SK-N-SH (cell line): ENCODE measurements at regions of chr10 and their contacts with region 1.

Region 1: DNA sequence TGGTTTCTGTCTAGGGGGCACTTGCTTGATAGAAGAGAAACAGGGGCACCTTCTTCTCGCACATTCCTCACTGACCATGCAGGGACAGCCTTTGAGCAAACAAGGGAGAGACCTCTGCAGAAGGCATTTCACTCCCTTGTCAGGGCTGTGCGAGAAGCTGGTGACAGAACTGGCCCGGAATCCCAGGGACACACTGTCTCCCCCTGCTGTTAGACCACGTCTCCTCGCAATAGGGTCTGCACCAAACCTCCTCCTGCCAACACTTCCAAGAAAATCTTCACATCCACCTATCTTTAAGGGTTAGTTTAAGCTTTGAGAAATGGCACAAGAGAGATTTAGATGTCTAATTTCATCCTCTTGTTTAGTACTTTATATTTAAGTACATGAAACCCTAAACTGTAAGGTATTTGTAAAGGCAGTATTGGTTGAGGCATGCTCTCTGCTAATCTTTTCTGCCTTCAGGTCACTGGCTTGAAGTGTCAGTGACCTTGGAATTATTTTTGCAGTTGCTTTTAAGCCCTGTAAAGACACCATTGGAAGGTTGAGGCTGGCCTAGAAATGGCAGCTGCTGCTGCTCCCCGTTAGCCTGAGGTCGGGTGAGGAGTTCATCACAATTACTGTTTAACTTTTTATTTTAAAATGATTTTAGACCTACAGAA is 37.0 kb downstream of the RBM20 start:
- DNase-seq: peak; percentile 76
- H3K4me3 ChIP-seq: peak overlapping the region in 1 of 2 experiments; percentile 33; a peak in 1 of 4 replicates
- H3K27ac ChIP-seq: no peak overlapping the region
- H3K4me1 ChIP-seq: peaks cover 0 to 18% of the 10 kb centered on the region in 2 experiments; a peak in 2 of 4 replicates
- H3K27me3 ChIP-seq: no peaks in the 10 kb centered on the region
- CTCF ChIP-seq: peak; percentile 56
- EP300 ChIP-seq: no peak
- RAD21 ChIP-seq: peak; percentile 58

Region 2: DNA sequence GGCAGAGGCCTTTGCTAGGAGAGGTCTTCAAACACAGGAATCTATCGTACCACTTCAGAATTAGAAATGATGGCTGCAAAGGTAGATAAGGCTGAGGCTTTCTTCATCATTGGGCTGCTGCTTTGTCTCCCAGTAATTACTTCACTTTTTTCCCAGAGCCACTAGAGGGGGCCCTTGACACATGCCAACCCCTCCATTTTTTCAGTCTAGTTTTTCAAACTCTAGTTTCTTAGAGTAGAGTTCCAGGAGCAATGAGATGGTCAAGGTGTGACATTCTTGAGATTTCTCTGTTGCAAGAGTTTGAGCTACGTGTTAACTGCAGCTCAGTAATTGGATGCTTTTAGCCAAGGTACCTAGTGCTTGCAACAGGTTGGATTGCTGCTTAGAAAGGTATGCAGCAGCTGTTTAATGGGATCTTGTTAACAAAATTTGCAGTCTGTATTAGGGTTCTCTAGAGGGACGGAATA is 70.8 kb before region 1 on chr10:
- CTCF ChIA-PET with region 1: interaction called, 12 read pairs
- POLR2A ChIA-PET with region 1: no interaction called
- DNase-seq: peak; percentile 69
- H3K4me3 ChIP-seq: peak overlapping the region in 1 of 2 experiments; percentile 16; a peak in 1 of 4 replicates
- H3K27ac ChIP-seq: peak overlapping the region in 1 of 2 experiments; percentile 74; a peak in 2 of 4 replicates
- H3K4me1 ChIP-seq: peaks cover 0 to 11% of the 10 kb centered on the region in 2 experiments; a peak in 2 of 4 replicates
- H3K27me3 ChIP-seq: no peaks in the 10 kb centered on the region
- CTCF ChIP-seq: peak; percentile 92
- EP300 ChIP-seq: no peak
- RAD21 ChIP-seq: peak; percentile 94

Region 3: DNA sequence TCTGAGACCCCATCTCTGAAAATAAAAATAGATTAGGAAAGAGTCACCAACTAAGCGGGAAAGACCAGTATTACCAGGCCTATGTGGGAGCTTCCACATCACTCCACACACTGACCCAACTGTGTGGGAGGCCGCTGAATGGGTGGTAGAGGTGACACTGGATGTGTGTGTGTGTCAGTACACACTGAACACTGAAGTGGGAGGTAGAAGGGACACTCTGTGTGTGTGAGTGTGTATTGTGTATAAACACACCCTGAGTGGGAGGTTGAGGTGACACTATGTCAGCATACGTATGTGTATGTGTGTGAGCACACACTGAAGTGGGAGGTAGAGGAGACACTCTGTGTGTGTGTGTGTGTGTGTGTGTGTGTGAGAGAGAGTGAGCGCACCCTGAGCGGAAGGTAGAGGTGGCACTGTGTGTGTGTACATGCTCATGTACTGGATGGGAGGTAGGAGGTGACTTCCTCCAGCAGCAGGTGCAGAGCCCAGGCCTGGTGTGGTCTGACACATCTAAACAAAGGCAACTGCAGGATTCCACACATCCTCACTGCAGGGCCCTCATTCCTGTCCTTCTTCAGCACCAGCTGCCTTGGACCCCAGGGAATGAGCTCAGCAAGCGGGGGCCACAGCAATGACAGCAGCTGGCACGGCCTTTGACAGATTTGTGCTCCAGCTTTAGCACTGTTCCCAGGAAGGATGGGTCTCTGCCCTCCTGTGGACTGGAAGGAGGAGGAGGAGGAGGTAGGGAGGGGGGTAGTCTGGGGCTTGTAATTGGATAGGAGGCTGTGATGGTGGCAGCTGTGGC is 63.5 kb before region 1 on chr10:
- CTCF ChIA-PET with region 1: interaction called, 12 read pairs
- POLR2A ChIA-PET with region 1: no interaction called
- DNase-seq: no peak
- H3K4me3 ChIP-seq: no peak overlapping the region
- H3K27ac ChIP-seq: no peak overlapping the region
- H3K4me1 ChIP-seq: peaks cover 0 to 3% of the 10 kb centered on the region in 2 experiments; a peak in 2 of 4 replicates
- H3K27me3 ChIP-seq: no peaks in the 10 kb centered on the region
- CTCF ChIP-seq: no peak
- EP300 ChIP-seq: no peak
- RAD21 ChIP-seq: no peak

Region 4: DNA sequence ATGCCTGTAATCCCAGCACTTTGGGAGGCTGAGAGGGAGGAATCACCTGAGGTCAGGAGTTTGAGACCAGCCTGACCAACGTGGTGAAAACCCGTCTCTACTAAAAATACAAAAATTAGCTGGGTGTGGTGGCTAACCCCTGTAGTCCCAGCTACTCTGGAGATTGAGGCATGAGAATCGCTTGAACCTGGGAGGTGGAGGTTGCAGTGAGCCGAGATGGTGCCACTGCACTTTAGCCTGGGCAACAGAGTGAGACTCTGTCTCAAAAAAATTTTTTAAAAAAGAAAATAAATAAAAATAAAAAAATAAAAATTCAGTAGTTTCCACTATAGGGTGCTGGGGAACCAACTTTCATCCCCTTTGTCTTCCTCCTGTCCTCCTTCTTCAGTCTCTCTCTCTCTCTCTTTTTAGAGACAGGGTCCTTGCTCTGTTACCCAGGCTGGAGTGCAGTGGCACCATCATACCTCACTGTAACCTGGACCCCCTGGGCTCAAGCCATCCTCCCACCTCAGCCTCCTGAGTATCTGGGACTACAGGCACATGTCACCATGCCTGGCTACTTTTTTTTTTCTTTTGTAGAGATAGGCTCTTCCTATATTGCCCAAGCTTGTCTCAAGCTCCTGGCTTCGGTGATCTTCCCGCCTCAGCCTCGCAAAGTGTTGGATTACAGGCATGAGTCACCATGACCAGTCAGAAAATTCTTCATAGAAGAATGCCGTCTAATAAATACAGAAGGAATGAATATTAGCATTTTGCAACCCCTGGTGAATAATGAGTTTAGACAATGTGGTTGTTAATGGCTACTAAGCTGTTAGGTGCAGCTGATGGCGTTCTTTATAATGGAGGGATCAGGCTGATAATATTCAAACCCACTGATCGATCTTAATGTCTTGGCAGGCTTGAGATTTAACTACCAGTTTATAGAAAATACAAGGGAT is 16.4 kb before region 1 on chr10:
- CTCF ChIA-PET with region 1: interaction called, 12 read pairs
- POLR2A ChIA-PET with region 1: no interaction called
- DNase-seq: no peak
- H3K4me3 ChIP-seq: no peak overlapping the region
- H3K27ac ChIP-seq: peak overlapping the region; percentile 1 to 47; a peak in 3 of 4 replicates
- H3K4me1 ChIP-seq: peaks cover 4 to 8% of the 10 kb centered on the region in 2 experiments; a peak in 1 of 4 replicates
- H3K27me3 ChIP-seq: no peaks in the 10 kb centered on the region
- CTCF ChIP-seq: no peak
- EP300 ChIP-seq: no peak
- RAD21 ChIP-seq: no peak

Region 5: GRCh38 chr10:110701617-110701971 is 20.4 kb after region 1 on chr10:
- CTCF ChIA-PET with region 1: interaction called, 10 read pairs
- POLR2A ChIA-PET with region 1: no interaction called
- DNase-seq: peak; percentile 33
- H3K4me3 ChIP-seq: no peak overlapping the region
- H3K27ac ChIP-seq: no peak overlapping the region; a peak in 1 of 4 replicates
- H3K4me1 ChIP-seq: peaks cover 7 to 27% of the 10 kb centered on the region in 2 experiments; a peak in 1 of 4 replicates
- H3K27me3 ChIP-seq: no peaks in the 10 kb centered on the region
- CTCF ChIP-seq: no peak
- EP300 ChIP-seq: no peak
- RAD21 ChIP-seq: no peak